ENCODE measurements at regions of chr6 and their contacts with region 1.

Region 1: GRCh38 chr6:124688369-124688768 is 273.9 kb upstream of the RNF217 start:
- DNase-seq: no peak
- H3K4me3 ChIP-seq: no peak overlapping the region
- H3K27ac ChIP-seq: no peak overlapping the region
- H3K4me1 ChIP-seq: no peaks in the 10 kb centered on the region
- H3K27me3 ChIP-seq: no peaks in the 10 kb centered on the region
- CTCF ChIP-seq: no peak
- EP300 ChIP-seq: no peak
- POLR2A ChIP-seq: no peak

Region 2: GRCh38 chr6:124640432-124640831 is 47.9 kb before region 1 on chr6:
- intact Hi-C with region 1: loop called in 1 of 4 experiments (anchors 2 kb)
- DNase-seq: no peak
- H3K4me3 ChIP-seq: no peak overlapping the region
- H3K27ac ChIP-seq: no peak overlapping the region
- H3K4me1 ChIP-seq: no peaks in the 10 kb centered on the region
- H3K27me3 ChIP-seq: no peaks in the 10 kb centered on the region
- CTCF ChIP-seq: no peak
- EP300 ChIP-seq: no peak
- POLR2A ChIP-seq: no peak

Region 3: GRCh38 chr6:124714728-124715127 is 26.4 kb after region 1 on chr6:
- intact Hi-C with region 1: no loop called
- DNase-seq: no peak
- H3K4me3 ChIP-seq: no peak overlapping the region
- H3K27ac ChIP-seq: no peak overlapping the region
- H3K4me1 ChIP-seq: no peaks in the 10 kb centered on the region
- H3K27me3 ChIP-seq: no peaks in the 10 kb centered on the region
- CTCF ChIP-seq: no peak
- EP300 ChIP-seq: no peak
- POLR2A ChIP-seq: no peak